ENCODE measurements at regions of chr1 and their contacts with region 1.

Region 1: GRCh38 chr1:15152318-15153183 is 996 bp upstream of the TMEM51 start:
- DNase-seq: peak; percentile 66 to 72 (median 67)
- H3K4me3 ChIP-seq: peak overlapping the region; percentile 34 to 77 (median 71)
- H3K27ac ChIP-seq: no peak overlapping the region
- H3K4me1 ChIP-seq: peaks cover 0 to 51% (median 42%) of the 10 kb centered on the region in 4 experiments
- H3K27me3 ChIP-seq: peaks cover 0 to 36% (median 13%) of the 10 kb centered on the region in 5 experiments

Region 2: GRCh38 chr1:15141935-15142539 is 10.5 kb before region 1 on chr1:
- CTCF ChIA-PET with region 1: interaction called, 25 read pairs
- POLR2A ChIA-PET with region 1: interaction called, 4 read pairs
- DNase-seq: peak; percentile 93 to 99 (median 99)
- H3K4me3 ChIP-seq: no peak overlapping the region
- H3K27ac ChIP-seq: no peak overlapping the region
- H3K4me1 ChIP-seq: peaks cover 0 to 65% (median 34%) of the 10 kb centered on the region in 4 experiments
- H3K27me3 ChIP-seq: no peaks in the 10 kb centered on the region

Measured in common myeloid progenitor, CD34-positive (primary cell).